ENCODE measurements at regions of chr1 and their contacts with region 1.

Region 1: GRCh38 chr1:50080909-50081586 is 27.7 kb upstream of the ELAVL4 start:
- DNase-seq: peak in 1 of 2 experiments; percentile 10
- H3K4me3 ChIP-seq: no peak overlapping the region
- H3K27ac ChIP-seq: no peak overlapping the region
- H3K4me1 ChIP-seq: no peaks in the 10 kb centered on the region
- H3K27me3 ChIP-seq: no peaks in the 10 kb centered on the region
- CTCF ChIP-seq: peak; percentile 60

Region 2: GRCh38 chr1:49523764-49524163 is 557.3 kb before region 1 on chr1:
- CTCF ChIA-PET with region 1: no interaction called
- POLR2A ChIA-PET with region 1: no interaction called
- intact Hi-C with region 1: no loop called
- DNase-seq: no peak
- H3K4me3 ChIP-seq: no peak overlapping the region
- H3K27ac ChIP-seq: no peak overlapping the region
- H3K4me1 ChIP-seq: no peaks in the 10 kb centered on the region
- H3K27me3 ChIP-seq: no peaks in the 10 kb centered on the region
- CTCF ChIP-seq: no peak

Region 3: GRCh38 chr1:50126927-50127700 is 46.1 kb after region 1 on chr1:
- CTCF ChIA-PET with region 1: no interaction called
- POLR2A ChIA-PET with region 1: no interaction called
- intact Hi-C with region 1: no loop called
- DNase-seq: no peak
- H3K4me3 ChIP-seq: no peak overlapping the region
- H3K27ac ChIP-seq: no peak overlapping the region
- H3K4me1 ChIP-seq: no peaks in the 10 kb centered on the region
- H3K27me3 ChIP-seq: no peaks in the 10 kb centered on the region
- CTCF ChIP-seq: no peak

Region 4: GRCh38 chr1:50332941-50333594 is 252.0 kb after region 1 on chr1:
- CTCF ChIA-PET with region 1: no interaction called
- POLR2A ChIA-PET with region 1: no interaction called
- intact Hi-C with region 1: loop called (anchors 10 kb)
- DNase-seq: peak in 1 of 2 experiments; percentile 46
- H3K4me3 ChIP-seq: no peak overlapping the region; the same call in 1 of the 2 replicates
- H3K27ac ChIP-seq: no peak overlapping the region
- H3K4me1 ChIP-seq: no peaks in the 10 kb centered on the region
- H3K27me3 ChIP-seq: peaks cover 41% of the 10 kb centered on the region; the same call in 1 of the 2 replicates
- CTCF ChIP-seq: peak; percentile 59

Region 5: GRCh38 chr1:50559421-50559820 is 478.4 kb after region 1 on chr1:
- CTCF ChIA-PET with region 1: no interaction called
- POLR2A ChIA-PET with region 1: no interaction called
- intact Hi-C with region 1: no loop called
- DNase-seq: no peak
- H3K4me3 ChIP-seq: no peak overlapping the region
- H3K27ac ChIP-seq: no peak overlapping the region
- H3K4me1 ChIP-seq: no peaks in the 10 kb centered on the region
- H3K27me3 ChIP-seq: no peaks in the 10 kb centered on the region
- CTCF ChIP-seq: no peak